Endothelial cell of umbilical vein (primary cell): ENCODE measurements at regions of chr5 and their contacts with region 1.

Region 1: DNA sequence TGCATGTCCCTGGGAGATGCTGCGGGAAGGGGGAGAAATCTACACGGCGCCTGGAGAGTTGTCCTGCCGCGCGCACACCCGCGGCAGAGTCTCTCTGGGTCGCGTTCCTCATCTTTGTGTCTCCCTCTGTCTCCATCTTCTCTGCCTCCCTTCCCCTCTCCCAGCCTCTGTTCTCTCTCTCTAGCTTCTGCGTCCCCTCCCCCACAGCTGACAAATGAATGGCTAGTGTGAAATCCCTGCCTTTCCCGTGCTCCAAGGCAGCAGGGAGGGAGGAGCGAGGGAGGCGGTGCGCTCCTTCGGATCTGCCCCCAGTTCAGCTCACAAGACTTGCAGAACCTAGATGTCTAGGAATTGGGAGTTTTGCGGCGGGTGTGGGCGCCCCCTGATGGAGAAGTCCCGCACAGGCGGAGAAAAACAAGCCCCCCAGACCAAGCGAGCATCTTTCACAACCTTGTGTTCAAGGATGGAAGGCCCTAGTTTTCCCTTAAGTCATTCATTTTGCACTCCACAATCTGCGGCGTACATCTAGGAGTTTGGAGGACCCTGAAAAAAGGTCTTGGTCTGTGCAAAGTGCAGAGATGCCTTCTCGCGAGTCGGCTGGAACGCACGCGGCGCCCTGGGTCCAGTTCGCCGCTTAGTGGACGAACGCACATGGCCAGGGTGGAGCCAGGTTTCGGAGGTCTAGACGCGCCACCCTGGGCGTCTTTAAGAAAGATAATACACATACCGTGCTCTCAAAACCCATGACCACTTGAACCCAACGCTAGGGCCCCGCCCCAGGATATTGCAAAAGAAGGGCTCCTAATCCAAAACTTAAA is 2.0 kb downstream of the VCAN start:
- DNase-seq: peak; percentile 87
- H3K4me3 ChIP-seq: peak overlapping the region; percentile 48 to 73 (median 59)
- H3K27ac ChIP-seq: no peak overlapping the region
- H3K4me1 ChIP-seq: peaks cover 35% of the 10 kb centered on the region
- H3K27me3 ChIP-seq: peaks cover 49 to 74% of the 10 kb centered on the region in 2 experiments
- CTCF ChIP-seq: peak; percentile 86
- POLR2A ChIP-seq: no peak

Region 2: DNA sequence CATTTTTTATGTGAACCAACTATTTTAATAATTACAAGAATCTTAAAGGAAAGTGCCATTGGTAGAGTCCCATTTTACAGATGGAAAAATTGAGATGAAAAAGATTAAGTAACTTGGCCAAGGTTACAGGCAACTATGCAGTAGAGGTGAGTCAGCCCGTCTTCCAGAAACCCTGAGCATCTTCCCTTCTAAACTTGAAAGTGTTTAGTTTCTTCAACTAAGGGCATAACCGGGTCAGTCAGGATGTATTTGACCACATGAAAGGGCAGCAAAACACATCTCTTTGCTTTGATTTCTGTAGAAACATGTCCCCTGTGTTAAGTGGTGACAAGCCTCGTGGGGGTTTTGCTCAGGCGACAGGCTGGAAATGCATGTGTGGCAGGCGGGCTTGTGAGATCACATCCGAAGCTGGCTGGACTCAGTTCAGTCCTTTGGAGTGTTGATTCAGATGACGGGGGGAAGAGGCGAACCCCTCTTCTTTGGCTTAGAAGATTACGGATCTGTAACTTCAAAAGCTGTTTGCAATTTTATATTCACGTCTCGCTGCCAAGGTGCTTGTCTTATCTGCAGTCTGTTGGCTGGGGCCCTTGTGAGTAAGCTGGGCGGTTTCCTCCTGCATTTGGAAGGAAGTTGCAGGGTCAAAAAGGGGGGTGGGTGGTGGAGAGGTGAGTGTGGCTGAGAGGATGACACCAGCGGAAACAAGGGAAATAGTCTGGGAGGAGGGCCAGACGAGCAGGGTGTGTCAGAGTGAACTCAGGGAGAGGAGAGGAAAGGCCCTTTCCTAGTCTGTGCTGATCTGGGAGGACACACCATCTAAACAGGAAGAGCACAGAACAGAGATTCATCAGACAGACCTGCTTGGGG is 1116.5 kb before region 1 on chr5:
- CTCF ChIA-PET with region 1: interaction called, 8 read pairs
- POLR2A ChIA-PET with region 1: no interaction called
- dilution Hi-C with region 1: no loop called
- intact Hi-C with region 1: loop called (anchors 1 kb)
- DNase-seq: peak; percentile 91
- H3K4me3 ChIP-seq: no peak overlapping the region
- H3K27ac ChIP-seq: peak overlapping the region; percentile 73
- H3K4me1 ChIP-seq: peaks cover 42% of the 10 kb centered on the region
- H3K27me3 ChIP-seq: no peaks in the 10 kb centered on the region
- CTCF ChIP-seq: no peak
- POLR2A ChIP-seq: peak; percentile 45

Region 3: DNA sequence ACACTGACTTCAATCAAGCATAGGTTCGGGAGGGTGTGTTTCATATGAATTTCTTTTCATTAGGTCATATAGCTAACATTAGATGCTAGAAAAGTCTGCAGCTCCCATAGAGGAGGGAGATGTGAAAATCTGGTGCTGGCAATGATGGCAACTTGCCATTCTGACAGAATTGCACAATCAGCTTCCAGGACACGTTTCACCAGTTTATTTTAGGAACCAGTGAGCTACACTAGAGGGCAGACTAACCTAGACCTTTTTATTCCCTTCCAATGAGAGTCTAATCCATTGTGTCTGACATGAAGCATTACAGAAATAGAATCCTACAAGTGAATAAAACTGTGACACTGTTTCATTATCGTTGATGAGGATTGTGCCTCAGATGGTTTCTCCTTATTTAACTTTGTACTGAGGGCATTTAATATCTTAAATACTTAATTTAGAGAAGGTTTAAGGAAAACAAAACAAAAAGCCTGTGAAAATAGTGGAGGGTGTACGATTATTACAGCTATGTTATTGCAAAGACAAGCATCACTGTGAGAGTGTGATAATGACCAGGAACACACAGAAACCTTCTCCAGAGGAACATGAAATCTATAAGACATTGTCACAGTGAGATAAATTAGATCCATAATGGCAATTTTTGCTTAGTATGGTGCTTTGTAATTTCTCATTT is 832.1 kb before region 1 on chr5:
- CTCF ChIA-PET with region 1: interaction called, 5 read pairs
- POLR2A ChIA-PET with region 1: no interaction called
- dilution Hi-C with region 1: no loop called
- intact Hi-C with region 1: loop called (anchors 1 kb)
- DNase-seq: peak; percentile 81
- H3K4me3 ChIP-seq: no peak overlapping the region
- H3K27ac ChIP-seq: no peak overlapping the region
- H3K4me1 ChIP-seq: no peaks in the 10 kb centered on the region
- H3K27me3 ChIP-seq: peaks cover 2% of the 10 kb centered on the region in 2 experiments
- CTCF ChIP-seq: peak; percentile 39 to 56
- POLR2A ChIP-seq: no peak

Region 4: GRCh38 chr5:83076742-83077661 is 396.6 kb before region 1 on chr5 and contains the starts of genes TMEM167A and XRCC4:
- CTCF ChIA-PET with region 1: no interaction called
- POLR2A ChIA-PET with region 1: no interaction called
- dilution Hi-C with region 1: no loop called
- intact Hi-C with region 1: loop called (anchors 2 kb)
- DNase-seq: peak; percentile 97
- H3K4me3 ChIP-seq: peak within 1 kb of the TSS; percentile 69 to 98 (median 93)
- H3K27ac ChIP-seq: peak within 1 kb of the TSS; percentile 85
- H3K4me1 ChIP-seq: peaks cover 14% of the 10 kb centered on the region
- H3K27me3 ChIP-seq: no peaks in the 10 kb centered on the region
- CTCF ChIP-seq: no peak
- POLR2A ChIP-seq: peak; percentile 77
- total RNA-seq, gene TMEM167A: 64.4 and 69.4 TPM in 2 replicates
- total RNA-seq, gene XRCC4: 7.6 and 7.7 TPM in 2 replicates

Region 5: DNA sequence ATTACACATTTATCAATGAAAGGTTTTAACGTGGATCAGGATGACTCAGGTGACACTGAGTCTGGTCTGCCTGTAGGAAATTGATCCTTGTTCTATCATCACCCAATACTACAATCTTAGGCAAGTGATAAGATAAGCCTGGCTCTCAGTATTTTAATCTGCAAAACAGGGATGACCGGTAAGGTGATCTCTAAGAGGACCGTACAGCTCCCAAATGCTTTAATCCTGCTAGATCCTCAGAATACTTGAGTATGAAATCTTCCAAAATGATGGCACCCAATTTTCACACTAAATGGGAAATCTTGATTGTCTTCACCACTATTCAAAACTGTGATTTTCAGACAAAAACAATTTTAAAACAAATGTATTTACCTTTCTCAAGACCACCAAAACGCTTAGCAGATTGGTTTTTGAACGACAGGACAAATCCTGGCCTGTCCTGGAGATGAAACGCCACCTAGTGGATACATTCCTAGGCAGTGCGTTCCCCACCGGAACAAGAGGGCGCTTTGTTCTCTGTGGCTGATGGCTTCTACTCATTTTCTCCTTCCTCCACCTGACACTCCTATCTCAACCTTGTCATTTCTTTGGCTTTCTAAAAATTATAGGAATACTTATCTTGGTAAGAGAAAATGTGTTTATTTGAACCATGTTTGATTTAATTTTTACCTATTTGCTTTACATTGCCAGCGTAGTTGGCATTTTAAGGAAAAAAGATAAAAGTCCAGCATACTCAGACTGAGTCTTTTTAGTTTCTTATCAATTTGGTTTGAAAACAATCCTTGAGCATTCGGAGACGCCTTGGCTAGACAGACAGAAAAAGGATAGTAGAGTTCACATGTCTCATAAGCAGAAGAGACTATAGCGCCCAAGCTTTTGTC is 43.2 kb before region 1 on chr5:
- CTCF ChIA-PET with region 1: interaction called, 11 read pairs
- POLR2A ChIA-PET with region 1: no interaction called
- dilution Hi-C with region 1: no loop called
- intact Hi-C with region 1: loop called (anchors 1 kb)
- DNase-seq: peak; percentile 67
- H3K4me3 ChIP-seq: no peak overlapping the region
- H3K27ac ChIP-seq: no peak overlapping the region
- H3K4me1 ChIP-seq: no peaks in the 10 kb centered on the region
- H3K27me3 ChIP-seq: peaks cover 5 to 8% of the 10 kb centered on the region in 2 experiments
- CTCF ChIP-seq: peak; percentile 89 to 96
- POLR2A ChIP-seq: no peak

Region 6: GRCh38 chr5:83538786-83539462 is 65.4 kb after region 1 on chr5:
- CTCF ChIA-PET with region 1: no interaction called
- POLR2A ChIA-PET with region 1: no interaction called
- dilution Hi-C with region 1: no loop called
- intact Hi-C with region 1: no loop called
- DNase-seq: no peak
- H3K4me3 ChIP-seq: no peak overlapping the region
- H3K27ac ChIP-seq: no peak overlapping the region
- H3K4me1 ChIP-seq: no peaks in the 10 kb centered on the region
- H3K27me3 ChIP-seq: peaks cover 12 to 27% of the 10 kb centered on the region in 2 experiments
- CTCF ChIP-seq: no peak
- POLR2A ChIP-seq: no peak

Region 7: GRCh38 chr5:83564069-83564749 is 90.7 kb after region 1 on chr5:
- CTCF ChIA-PET with region 1: interaction called, 8 read pairs
- POLR2A ChIA-PET with region 1: no interaction called
- dilution Hi-C with region 1: no loop called
- intact Hi-C with region 1: loop called (anchors 1 kb)
- DNase-seq: peak; percentile 81
- H3K4me3 ChIP-seq: no peak overlapping the region
- H3K27ac ChIP-seq: no peak overlapping the region
- H3K4me1 ChIP-seq: peaks cover 4% of the 10 kb centered on the region
- H3K27me3 ChIP-seq: peaks cover 0 to 8% of the 10 kb centered on the region in 2 experiments
- CTCF ChIP-seq: peak; percentile 16 to 24
- POLR2A ChIP-seq: no peak